Heart left ventricle (tissue), 16 donors: ENCODE measurements at regions of chr4 and their contacts with region 1.

Region 1: DNA sequence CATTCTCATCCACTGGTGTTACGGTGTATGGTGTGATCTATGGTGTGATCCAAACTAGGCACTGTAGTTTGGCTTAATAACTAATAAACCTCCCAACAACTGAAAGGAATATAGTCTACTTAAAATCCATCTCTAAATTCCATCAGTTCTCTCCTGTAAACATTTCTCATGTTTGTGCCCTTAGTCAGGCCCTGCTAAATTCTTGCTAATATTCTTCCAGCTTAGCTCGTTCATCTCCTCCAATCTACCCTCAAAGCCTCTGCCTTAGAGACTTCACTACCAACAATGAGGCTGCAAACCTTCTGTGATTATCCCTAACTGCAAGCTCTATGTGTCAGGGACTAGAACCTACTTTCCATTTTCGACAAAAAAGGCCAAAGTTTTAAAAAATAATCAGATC is 28.1 kb downstream of the ZAR1 start:
- DNase-seq: no peak
- ATAC-seq: no peak
- H3K4me3 ChIP-seq: no peak overlapping the region
- H3K27ac ChIP-seq: no peak overlapping the region
- H3K4me1 ChIP-seq: no peaks in the 10 kb centered on the region
- H3K27me3 ChIP-seq: no peaks in the 10 kb centered on the region
- CTCF ChIP-seq: no peak
- POLR2A ChIP-seq: no peak

Region 2: DNA sequence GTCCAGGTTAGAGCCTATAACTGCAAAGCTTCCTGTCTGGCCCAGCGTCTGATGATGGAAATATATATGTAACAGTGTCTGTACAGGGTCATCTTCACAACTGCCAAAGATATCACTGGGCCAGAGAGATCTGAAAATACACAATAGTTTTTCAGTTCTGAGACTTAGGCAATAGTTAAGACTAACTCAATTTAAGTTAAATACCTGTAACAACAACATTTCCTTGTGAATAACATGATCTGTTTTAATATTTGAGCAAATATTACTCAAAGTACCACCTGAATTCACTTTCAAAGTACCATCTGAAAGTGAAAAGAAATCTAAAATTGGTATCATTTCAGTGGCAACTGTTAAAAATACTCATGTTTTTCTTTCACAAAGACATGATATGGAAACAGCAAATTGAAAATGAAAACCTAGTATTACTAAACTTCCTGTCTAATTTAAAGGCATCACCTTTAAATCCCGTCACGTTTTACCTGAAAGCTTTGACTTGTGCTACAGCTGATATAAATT is 18.5 kb before region 1 on chr4:
- intact Hi-C with region 1: loop called in 1 of 10 experiments (anchors 2 kb)
- DNase-seq: no peak
- ATAC-seq: no peak
- H3K4me3 ChIP-seq: no peak overlapping the region
- H3K27ac ChIP-seq: no peak overlapping the region
- H3K4me1 ChIP-seq: no peaks in the 10 kb centered on the region
- H3K27me3 ChIP-seq: no peaks in the 10 kb centered on the region
- CTCF ChIP-seq: no peak
- POLR2A ChIP-seq: no peak

Region 3: GRCh38 chr4:48565362-48566033 is 47.4 kb after region 1 on chr4:
- intact Hi-C with region 1: loop called in 1 of 10 experiments (anchors 10 kb)
- DNase-seq: no peak
- ATAC-seq: no peak
- H3K4me3 ChIP-seq: no peak overlapping the region
- H3K27ac ChIP-seq: no peak overlapping the region
- H3K4me1 ChIP-seq: no peaks in the 10 kb centered on the region
- H3K27me3 ChIP-seq: no peaks in the 10 kb centered on the region
- CTCF ChIP-seq: no peak
- POLR2A ChIP-seq: no peak

Region 4: DNA sequence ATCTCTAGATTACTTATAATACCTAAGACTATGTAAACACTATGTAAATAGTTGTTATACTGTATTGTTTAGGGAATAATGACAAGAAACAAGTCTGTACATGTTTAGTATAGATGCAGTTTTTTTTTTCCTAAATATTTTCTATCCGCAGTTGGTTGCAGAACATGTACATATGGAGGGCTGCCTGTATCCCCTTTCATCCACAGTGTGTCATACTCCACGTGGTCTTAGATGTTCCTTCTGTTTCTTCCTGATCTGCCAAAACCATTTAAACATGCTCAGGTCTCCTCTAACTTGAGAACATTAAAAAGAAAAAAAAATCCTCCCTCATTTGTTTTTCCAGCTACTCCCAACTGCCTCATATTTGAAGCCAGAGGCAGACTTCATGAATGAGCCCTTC is 326.7 kb after region 1 on chr4:
- intact Hi-C with region 1: loop called in 1 of 10 experiments (anchors 10 kb)
- DNase-seq: no peak
- ATAC-seq: no peak
- H3K4me3 ChIP-seq: no peak overlapping the region
- H3K27ac ChIP-seq: no peak overlapping the region
- H3K4me1 ChIP-seq: peaks cover 0 to 6% (median 0%) of the 10 kb centered on the region in 12 donors
- H3K27me3 ChIP-seq: no peaks in the 10 kb centered on the region
- CTCF ChIP-seq: no peak
- POLR2A ChIP-seq: no peak